AG04450 (cell line): ENCODE measurements at regions of chr14 and their contacts with region 1.

Region 1: DNA sequence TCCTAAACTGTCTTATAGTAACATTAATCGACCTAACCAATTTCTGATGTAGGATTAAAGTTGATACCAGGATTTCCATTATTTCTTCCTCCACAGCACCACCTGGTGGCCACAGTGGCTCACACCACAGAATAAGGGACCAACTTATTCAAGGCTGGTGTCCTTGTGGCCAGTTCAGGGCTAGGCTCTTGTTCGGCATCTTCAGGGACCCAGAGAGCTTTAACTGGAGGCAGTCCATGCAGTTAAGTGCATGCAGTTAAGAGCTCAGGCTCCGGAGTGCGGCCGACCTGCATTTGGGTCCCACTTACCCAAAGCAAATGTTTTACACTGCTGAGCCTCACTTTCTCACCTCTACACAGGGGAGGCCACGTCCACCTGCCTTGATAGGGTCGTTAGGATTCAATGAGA is 42.0 kb upstream of the GPR68 start:
- DNase-seq: peak; percentile 37
- H3K4me3 ChIP-seq: no peak overlapping the region
- H3K27ac ChIP-seq: no peak overlapping the region
- H3K27me3 ChIP-seq: no peaks in the 10 kb centered on the region
- CTCF ChIP-seq: peak; percentile 87

Region 2: DNA sequence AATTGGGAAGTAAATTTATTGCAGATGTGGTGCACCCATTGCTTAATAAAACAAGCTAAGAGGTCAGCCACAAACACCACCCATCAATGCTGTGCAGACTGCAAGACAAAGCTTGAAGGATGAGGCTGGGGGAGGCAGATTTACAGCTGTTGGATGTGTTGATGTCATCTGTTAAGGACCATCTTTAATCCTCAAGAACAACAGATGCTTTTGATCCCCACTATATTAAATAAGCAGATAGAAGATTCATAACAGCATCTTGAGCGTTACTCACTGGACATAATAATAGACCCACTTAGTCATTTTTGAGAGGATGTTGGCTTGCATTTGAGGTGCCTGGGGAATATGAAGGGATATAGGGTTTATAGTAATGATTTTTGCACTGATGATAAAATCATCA is 100.8 kb before region 1 on chr14:
- CTCF ChIA-PET with region 1: interaction called, 350 read pairs
- POLR2A ChIA-PET with region 1: no interaction called
- DNase-seq: no peak
- H3K4me3 ChIP-seq: no peak overlapping the region
- H3K27ac ChIP-seq: no peak overlapping the region
- H3K27me3 ChIP-seq: no peaks in the 10 kb centered on the region
- CTCF ChIP-seq: no peak

Region 3: DNA sequence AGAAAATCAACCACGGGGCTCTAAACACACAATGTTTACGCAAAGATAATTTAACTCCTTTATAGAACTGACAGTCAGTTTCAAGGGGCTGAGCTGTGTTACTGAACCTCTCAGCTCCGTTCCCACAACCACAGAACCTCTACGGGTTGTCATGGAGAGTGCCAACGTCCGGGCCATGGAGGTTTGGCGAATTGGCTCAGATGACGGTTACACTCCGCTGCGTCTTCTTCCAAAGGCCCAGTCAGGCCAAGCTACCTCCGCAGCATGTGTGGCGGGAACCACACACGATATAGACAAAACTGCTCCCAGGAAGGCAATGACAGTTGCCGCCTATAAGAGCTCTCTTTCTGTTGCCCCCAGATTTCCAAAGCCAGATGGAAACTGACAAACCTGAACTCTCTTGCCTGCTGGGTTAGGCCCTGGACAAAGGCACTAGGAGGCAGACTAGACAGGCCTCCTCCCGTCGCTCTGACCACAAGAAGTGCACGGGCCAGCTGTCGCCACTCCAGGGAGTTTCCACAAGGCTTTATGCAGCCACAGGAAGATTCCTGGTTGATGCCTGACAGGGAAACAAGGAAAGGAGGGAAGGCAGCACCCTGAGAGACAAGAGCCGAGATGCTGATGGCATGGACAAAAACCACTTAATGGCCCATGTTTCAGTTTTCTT is 100.8 kb after region 1 on chr14:
- CTCF ChIA-PET with region 1: interaction called, 10 read pairs
- POLR2A ChIA-PET with region 1: no interaction called
- DNase-seq: no peak
- H3K4me3 ChIP-seq: no peak overlapping the region
- H3K27ac ChIP-seq: no peak overlapping the region
- H3K27me3 ChIP-seq: peaks cover 3% of the 10 kb centered on the region
- CTCF ChIP-seq: no peak

Region 4: DNA sequence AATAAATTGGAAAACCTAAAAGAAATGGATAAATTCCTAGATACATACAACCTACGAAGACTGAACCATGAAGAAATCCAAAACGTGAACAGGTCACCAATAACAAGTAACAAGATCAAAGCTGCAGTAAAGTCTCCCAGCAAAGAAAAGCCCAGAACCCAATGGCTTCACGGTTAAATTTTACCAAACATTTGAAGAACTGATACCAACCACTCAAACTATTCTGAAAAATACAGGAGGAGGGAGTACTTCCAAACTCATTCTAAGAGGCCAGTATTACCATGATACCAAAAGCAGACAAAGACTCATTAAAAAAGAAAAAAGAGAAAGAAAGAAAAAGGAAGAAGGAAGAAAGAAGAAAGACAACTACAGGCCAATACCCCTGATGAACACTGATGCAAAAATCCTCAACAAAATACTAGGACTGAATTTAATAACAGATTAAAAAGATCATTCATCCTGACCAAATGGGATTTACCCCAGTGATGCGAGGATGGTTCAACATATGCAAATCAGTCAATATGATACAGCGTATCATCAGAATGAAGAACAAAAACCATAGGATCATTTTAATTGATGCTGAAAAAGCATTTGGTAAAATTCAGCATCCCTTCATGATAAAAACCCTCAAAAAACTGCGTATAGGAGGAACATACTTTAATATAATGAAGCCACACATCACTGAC is 157.9 kb after region 1 on chr14:
- CTCF ChIA-PET with region 1: no interaction called
- POLR2A ChIA-PET with region 1: no interaction called
- DNase-seq: no peak
- H3K4me3 ChIP-seq: no peak overlapping the region
- H3K27ac ChIP-seq: no peak overlapping the region
- H3K27me3 ChIP-seq: peaks cover 3% of the 10 kb centered on the region
- CTCF ChIP-seq: no peak

Region 5: DNA sequence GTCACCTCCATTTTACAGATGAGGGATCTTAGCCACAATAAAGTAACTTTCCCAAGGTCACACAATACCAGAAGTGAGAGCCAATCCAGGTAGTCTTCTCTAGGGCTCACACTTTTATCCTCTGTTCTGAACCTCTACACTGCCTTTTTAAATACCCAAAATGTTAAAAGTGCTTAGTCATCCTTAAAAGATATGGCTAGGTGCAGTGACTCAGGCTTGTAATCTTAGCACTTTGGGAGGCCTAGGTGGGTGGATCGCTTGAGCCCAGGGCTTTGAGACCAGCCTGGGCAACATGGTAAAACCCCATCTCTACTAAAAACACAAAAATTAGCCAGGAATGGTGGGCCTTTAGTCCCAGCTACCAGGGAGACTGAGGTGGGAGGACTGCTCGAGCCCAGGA is 327.7 kb after region 1 on chr14:
- CTCF ChIA-PET with region 1: no interaction called
- POLR2A ChIA-PET with region 1: no interaction called
- DNase-seq: no peak
- H3K4me3 ChIP-seq: no peak overlapping the region
- H3K27ac ChIP-seq: no peak overlapping the region
- H3K27me3 ChIP-seq: no peaks in the 10 kb centered on the region
- CTCF ChIP-seq: no peak